ENCODE measurements at regions of chr9 and their contacts with region 1.

Region 1: GRCh38 chr9:89405826-89406225 is 87.5 kb downstream of the SECISBP2 start:
- DNase-seq: peak in 2 of 3 donors; percentile 68 to 69
- H3K4me3 ChIP-seq: peak overlapping the region in 3 of 7 experiments; percentile 15 to 35 (median 29)
- H3K27ac ChIP-seq: peak overlapping the region; percentile 10 to 60
- H3K4me1 ChIP-seq: peaks cover 29 to 81% (median 70%) of the 10 kb centered on the region in 4 experiments
- H3K27me3 ChIP-seq: no peaks in the 10 kb centered on the region

Region 2: DNA sequence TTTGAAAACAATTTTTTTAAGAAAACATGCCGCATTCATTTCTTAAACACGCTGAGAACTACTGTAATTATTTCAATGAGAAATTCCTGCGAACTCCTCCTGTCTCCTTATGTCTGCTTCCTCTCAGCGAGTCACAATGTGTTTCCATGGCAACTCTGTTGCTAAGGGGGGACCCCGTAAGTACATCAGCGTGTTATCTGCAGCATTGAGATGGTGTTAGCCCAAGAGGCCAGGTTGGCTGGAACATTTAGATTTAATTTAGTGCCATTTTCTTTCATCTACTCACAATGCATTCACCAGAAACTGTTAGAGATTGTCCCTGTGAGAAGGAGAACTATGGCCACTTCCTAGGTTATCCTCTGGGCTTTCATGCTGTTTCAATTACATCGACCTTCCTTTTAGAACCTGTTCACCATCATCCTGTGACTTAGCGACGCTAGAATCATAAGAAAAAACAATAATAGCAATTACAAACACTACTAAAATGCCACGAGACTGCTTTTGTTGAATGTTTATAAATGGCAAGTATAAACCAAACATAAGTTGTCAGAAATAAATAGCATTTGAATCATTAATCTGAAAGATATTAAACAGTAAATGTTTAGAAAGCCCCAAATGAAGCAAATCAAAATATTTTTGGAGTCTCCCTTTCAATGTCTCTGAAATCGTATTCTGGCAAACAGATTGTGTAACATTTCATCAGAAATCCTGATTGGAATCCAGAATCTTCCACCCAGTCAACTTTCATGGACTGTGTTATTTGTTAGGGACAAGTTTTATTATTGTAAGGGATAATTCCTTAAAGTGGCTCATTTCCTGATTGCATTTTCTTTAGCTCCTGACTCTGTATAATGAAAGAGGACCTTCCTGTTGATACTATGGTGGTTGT is 187.5 kb before region 1 on chr9:
- CTCF ChIA-PET with region 1: no interaction called
- POLR2A ChIA-PET with region 1: no interaction called
- DNase-seq: no peak
- H3K4me3 ChIP-seq: no peak overlapping the region
- H3K27ac ChIP-seq: no peak overlapping the region
- H3K4me1 ChIP-seq: no peaks in the 10 kb centered on the region
- H3K27me3 ChIP-seq: peaks cover 0 to 8% (median 6%) of the 10 kb centered on the region in 5 experiments

Region 3: DNA sequence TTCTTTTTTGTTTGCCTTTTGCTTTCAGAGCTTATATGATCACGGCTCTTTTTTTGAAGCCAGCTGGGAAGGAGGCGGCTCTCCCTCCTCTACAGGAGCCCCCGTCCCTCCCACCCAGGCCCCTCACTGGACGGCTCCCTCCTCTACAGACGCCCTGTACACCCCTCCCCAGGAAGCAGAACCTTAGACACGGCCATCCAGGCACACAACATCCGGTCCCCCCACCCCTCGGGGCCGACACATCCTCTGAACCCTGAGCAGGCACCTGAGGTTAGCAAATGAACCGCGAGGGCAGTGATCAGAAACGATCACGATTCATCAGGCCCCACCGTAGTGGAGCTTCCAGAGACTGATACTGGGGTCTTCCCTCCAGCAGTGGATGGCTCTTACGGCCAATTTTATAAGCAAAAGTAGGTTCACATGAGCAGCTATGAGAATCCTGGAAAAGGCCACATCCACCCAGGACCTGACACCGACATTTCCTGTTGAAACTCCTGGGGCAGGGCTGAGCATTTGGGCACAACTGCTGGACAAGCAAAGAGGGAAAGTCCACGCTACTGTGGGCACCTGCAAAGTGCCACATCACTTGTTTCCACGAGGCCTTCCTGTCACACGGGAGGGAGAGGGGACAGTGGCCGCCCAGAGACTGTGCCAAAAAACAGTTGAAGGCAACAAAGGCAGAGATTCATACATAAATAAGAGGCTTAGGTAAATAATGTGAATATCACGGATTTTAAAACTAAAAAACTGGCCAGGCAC is 13.2 kb after region 1 on chr9:
- CTCF ChIA-PET with region 1: interaction called, 13 read pairs
- POLR2A ChIA-PET with region 1: interaction called, 4 read pairs
- DNase-seq: peak in 2 of 3 donors; percentile 70 to 82
- H3K4me3 ChIP-seq: peak overlapping the region in 3 of 7 experiments; percentile 0 to 21 (median 6)
- H3K27ac ChIP-seq: peak overlapping the region in 1 of 2 experiments; percentile 40
- H3K4me1 ChIP-seq: peaks cover 6 to 82% (median 68%) of the 10 kb centered on the region in 4 experiments
- H3K27me3 ChIP-seq: no peaks in the 10 kb centered on the region

Region 4: GRCh38 chr9:89538871-89539270 is 133.0 kb after region 1 on chr9:
- CTCF ChIA-PET with region 1: no interaction called
- POLR2A ChIA-PET with region 1: no interaction called
- DNase-seq: no peak
- H3K4me3 ChIP-seq: no peak overlapping the region
- H3K27ac ChIP-seq: no peak overlapping the region
- H3K4me1 ChIP-seq: peaks cover 12 to 65% (median 31%) of the 10 kb centered on the region in 4 experiments
- H3K27me3 ChIP-seq: no peaks in the 10 kb centered on the region

Measured in common myeloid progenitor, CD34-positive (primary cell).